Dendritic cell treated with granulocyte-macrophage colony-stimulating factor and Interleukin-4, amounts not matched to agents 40 ng/mL and 50 ng/mL, for 4 days (primary cell): ENCODE measurements at regions of chr6 and their contacts with region 1.

Region 1: GRCh38 chr6:35359751-35360348 is 17.5 kb downstream of the PPARD start:
- H3K4me3 Mint-ChIP-seq: no peak overlapping the region
- H3K27ac Mint-ChIP-seq: peak overlapping the region; percentile 72
- H3K4me1 Mint-ChIP-seq: peaks cover 97% of the 10 kb centered on the region
- H3K27me3 Mint-ChIP-seq: no peaks in the 10 kb centered on the region

Region 2: GRCh38 chr6:34964564-34964963 is 395.3 kb before region 1 on chr6:
- intact Hi-C with region 1: no loop called
- H3K4me3 Mint-ChIP-seq: no peak overlapping the region
- H3K27ac Mint-ChIP-seq: no peak overlapping the region
- H3K4me1 Mint-ChIP-seq: peaks cover 7% of the 10 kb centered on the region
- H3K27me3 Mint-ChIP-seq: no peaks in the 10 kb centered on the region

Region 3: GRCh38 chr6:35391240-35391968 is 31.6 kb after region 1 on chr6:
- intact Hi-C with region 1: loop called (anchors 5 kb)
- H3K4me3 Mint-ChIP-seq: no peak overlapping the region
- H3K27ac Mint-ChIP-seq: no peak overlapping the region
- H3K4me1 Mint-ChIP-seq: peaks cover 66% of the 10 kb centered on the region
- H3K27me3 Mint-ChIP-seq: peaks cover 1% of the 10 kb centered on the region